ENCODE measurements at regions of chr11 and their contacts with region 1.

Region 1: DNA sequence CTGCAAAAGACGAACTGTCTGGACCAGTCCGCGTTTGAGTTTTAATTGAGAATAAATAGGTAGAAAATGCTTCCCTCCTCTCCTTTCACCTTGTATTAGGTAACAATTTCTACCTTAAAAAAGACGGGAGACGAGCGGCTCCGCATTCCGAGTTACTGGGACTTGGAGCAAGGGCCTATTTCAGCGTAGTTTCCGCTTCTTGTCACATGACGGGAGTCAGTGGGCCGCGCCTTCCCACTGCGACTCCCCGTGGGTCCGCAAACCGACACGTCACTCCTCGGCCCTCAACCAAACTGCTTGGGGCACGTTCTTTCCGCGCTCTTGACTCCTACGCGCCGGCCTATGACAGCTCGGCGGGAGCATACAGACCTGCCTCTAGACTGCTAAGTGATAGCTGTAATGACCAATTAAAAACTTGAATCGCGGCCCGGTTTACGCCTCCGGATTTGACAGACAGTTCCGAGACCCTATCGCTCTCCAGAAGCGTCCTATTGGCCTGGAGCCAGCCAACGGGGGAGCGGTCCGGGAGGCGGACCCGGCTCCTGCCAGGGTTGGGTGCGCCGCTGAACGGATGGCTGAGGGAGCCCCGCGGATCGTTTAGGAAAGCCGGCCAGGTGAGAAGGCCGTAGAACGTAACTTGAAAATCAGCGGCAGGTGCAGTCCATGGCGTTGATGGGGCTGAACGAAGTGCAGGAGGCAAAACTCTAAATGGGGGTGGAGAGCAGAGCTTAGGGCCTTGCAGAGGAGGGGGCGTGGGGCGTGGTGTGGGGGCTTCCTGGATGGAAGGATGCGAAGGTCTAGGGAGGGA is at the start of gene STT3A:
- DNase-seq: peak; percentile 97
- CTCF ChIP-seq: no peak

Region 2: DNA sequence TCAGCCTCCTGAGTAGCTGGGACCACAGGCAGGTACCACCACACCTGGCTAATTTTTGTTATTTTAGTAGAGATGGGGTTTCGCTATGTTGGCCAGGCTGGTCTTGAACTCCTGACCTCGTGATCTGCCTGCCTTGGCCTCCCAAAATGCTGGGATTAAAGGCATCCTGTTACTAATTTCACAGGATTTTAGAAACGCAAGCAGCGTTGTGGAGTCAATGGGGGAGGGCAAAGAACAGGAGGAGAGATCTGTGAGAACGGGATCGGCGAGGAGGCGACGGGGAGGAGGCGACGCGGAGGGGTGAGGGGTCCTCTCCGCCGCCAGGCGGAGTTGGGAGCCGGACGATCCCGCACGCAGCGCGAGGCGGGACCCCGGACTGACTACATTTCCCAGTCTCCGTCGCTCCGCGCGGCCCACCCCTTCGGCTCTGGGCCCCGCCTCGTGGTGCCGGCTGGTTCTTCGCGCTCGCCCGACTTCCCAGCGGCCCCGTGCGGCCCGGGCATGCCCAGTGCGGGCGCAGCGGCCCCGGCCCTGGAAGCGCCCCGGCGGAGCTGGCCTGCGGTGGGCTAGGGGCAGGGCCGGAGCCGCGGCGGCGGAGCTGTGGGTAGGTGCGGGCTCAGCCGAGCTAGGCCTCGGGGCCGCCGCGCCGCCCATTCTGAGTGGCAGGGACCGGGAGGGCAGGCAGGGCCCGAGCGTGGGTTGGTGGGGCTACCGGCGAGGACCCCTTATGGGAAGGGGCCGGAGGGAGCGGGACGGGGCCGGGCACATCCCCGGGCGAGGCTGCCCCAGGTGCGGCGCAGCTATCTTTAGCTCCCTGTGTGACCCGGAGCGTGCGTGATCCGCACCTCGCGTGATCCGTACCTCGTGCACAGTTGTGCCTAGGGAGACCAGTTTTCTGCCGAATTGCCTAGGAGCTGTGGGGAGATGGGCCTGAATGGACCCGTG is 23.3 kb before region 1 on chr11 and contains the start of gene EI24:
- CTCF ChIA-PET with region 1: interaction called, 15 read pairs
- POLR2A ChIA-PET with region 1: interaction called, 3 read pairs
- DNase-seq: peak; percentile 92
- CTCF ChIP-seq: peak; percentile 46

Region 3: GRCh38 chr11:125625630-125626287 is 33.2 kb after region 1 on chr11:
- CTCF ChIA-PET with region 1: interaction called, 11 read pairs
- POLR2A ChIA-PET with region 1: interaction called, 3 read pairs
- DNase-seq: peak; percentile 84
- CTCF ChIP-seq: no peak

Region 4: GRCh38 chr11:126186708-126187529 is 594.4 kb after region 1 on chr11:
- CTCF ChIA-PET with region 1: no interaction called
- POLR2A ChIA-PET with region 1: interaction called, 11 read pairs
- DNase-seq: no peak
- CTCF ChIP-seq: no peak